K562 (cell line): ENCODE measurements at regions of chr7 and their contacts with region 1.

Region 1: GRCh38 chr7:26989897-26990670 is 105.7 kb downstream of the HOXA1 start:
- DNase-seq: no peak
- ATAC-seq: no peak
- H3K4me3 ChIP-seq: no peak overlapping the region
- H3K27ac ChIP-seq: no peak overlapping the region
- H3K4me1 ChIP-seq: no peaks in the 10 kb centered on the region
- H3K27me3 ChIP-seq: no peaks in the 10 kb centered on the region; a peak in 1 of 5 replicates
- CTCF ChIP-seq: no peak
- EP300 ChIP-seq: no peak
- POLR2A ChIP-seq: no peak
- RAD21 ChIP-seq: no peak

Region 2: GRCh38 chr7:26490650-26491624 is 499.1 kb before region 1 on chr7:
- CTCF ChIA-PET with region 1: no interaction called
- POLR2A ChIA-PET with region 1: no interaction called
- in situ Hi-C with region 1: no loop called
- intact Hi-C with region 1: no loop called
- DNase-seq: no peak
- ATAC-seq: no peak
- H3K4me3 ChIP-seq: no peak overlapping the region
- H3K27ac ChIP-seq: no peak overlapping the region
- H3K4me1 ChIP-seq: no peaks in the 10 kb centered on the region
- H3K27me3 ChIP-seq: peaks cover 34 to 52% of the 10 kb centered on the region in 2 experiments
- CTCF ChIP-seq: no peak
- EP300 ChIP-seq: no peak
- POLR2A ChIP-seq: no peak
- RAD21 ChIP-seq: no peak

Region 3: GRCh38 chr7:27000496-27000895 is 10.4 kb after region 1 on chr7:
- CTCF ChIA-PET with region 1: no interaction called
- POLR2A ChIA-PET with region 1: no interaction called
- in situ Hi-C with region 1: no loop called
- intact Hi-C with region 1: no loop called
- DNase-seq: peak in 1 of 4 experiments; percentile 6
- ATAC-seq: no peak
- H3K4me3 ChIP-seq: no peak overlapping the region
- H3K27ac ChIP-seq: no peak overlapping the region
- H3K4me1 ChIP-seq: no peaks in the 10 kb centered on the region
- H3K27me3 ChIP-seq: no peaks in the 10 kb centered on the region
- CTCF ChIP-seq: no peak
- EP300 ChIP-seq: no peak
- POLR2A ChIP-seq: no peak
- RAD21 ChIP-seq: no peak

Region 4: GRCh38 chr7:27901028-27901760 is 911.1 kb after region 1 on chr7:
- CTCF ChIA-PET with region 1: no interaction called
- POLR2A ChIA-PET with region 1: no interaction called
- in situ Hi-C with region 1: no loop called
- intact Hi-C with region 1: loop called (anchors 10 kb)
- DNase-seq: no peak
- ATAC-seq: peak; percentile 47; the same call in 1 of the 3 replicates
- H3K4me3 ChIP-seq: no peak overlapping the region
- H3K27ac ChIP-seq: no peak overlapping the region
- H3K4me1 ChIP-seq: no peaks in the 10 kb centered on the region
- H3K27me3 ChIP-seq: peaks cover 19 to 38% of the 10 kb centered on the region in 2 experiments; a peak in 4 of 5 replicates
- CTCF ChIP-seq: no peak
- EP300 ChIP-seq: no peak
- POLR2A ChIP-seq: no peak
- RAD21 ChIP-seq: no peak